ENCODE measurements at regions of chr10 and their contacts with region 1.

Region 1: GRCh38 chr10:24882047-24882698 is 70.2 kb downstream of the PRTFDC1 start:
- H3K4me3 Mint-ChIP-seq: no peak overlapping the region
- H3K27ac Mint-ChIP-seq: no peak overlapping the region
- H3K4me1 Mint-ChIP-seq: peaks cover 27% of the 10 kb centered on the region
- H3K27me3 Mint-ChIP-seq: peaks cover 3% of the 10 kb centered on the region

Region 2: GRCh38 chr10:24153031-24153430 is 729.1 kb before region 1 on chr10:
- intact Hi-C with region 1: no loop called
- H3K4me3 Mint-ChIP-seq: no peak overlapping the region
- H3K27ac Mint-ChIP-seq: no peak overlapping the region
- H3K4me1 Mint-ChIP-seq: no peaks in the 10 kb centered on the region
- H3K27me3 Mint-ChIP-seq: no peaks in the 10 kb centered on the region

Region 3: DNA sequence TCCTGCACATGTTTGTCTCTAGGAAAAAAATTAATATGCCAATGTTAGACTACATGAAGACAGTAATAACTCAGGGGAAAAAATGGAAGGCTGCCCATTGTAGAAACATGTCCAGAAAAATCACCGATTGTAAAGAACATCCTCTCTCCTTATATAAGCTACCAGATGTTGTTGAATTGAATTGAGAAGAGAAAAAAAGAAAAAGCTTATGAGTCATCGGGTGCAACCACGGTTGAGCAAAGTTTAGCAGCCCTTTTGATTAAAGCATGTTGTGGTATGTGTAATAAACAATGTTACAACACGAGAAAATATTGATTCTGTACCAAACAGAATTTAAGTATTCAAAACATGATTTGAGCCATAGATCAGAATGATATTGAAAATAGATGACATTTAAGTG is 56.2 kb before region 1 on chr10:
- intact Hi-C with region 1: no loop called
- H3K4me3 Mint-ChIP-seq: no peak overlapping the region
- H3K27ac Mint-ChIP-seq: no peak overlapping the region
- H3K4me1 Mint-ChIP-seq: no peaks in the 10 kb centered on the region
- H3K27me3 Mint-ChIP-seq: peaks cover 2% of the 10 kb centered on the region

Region 4: DNA sequence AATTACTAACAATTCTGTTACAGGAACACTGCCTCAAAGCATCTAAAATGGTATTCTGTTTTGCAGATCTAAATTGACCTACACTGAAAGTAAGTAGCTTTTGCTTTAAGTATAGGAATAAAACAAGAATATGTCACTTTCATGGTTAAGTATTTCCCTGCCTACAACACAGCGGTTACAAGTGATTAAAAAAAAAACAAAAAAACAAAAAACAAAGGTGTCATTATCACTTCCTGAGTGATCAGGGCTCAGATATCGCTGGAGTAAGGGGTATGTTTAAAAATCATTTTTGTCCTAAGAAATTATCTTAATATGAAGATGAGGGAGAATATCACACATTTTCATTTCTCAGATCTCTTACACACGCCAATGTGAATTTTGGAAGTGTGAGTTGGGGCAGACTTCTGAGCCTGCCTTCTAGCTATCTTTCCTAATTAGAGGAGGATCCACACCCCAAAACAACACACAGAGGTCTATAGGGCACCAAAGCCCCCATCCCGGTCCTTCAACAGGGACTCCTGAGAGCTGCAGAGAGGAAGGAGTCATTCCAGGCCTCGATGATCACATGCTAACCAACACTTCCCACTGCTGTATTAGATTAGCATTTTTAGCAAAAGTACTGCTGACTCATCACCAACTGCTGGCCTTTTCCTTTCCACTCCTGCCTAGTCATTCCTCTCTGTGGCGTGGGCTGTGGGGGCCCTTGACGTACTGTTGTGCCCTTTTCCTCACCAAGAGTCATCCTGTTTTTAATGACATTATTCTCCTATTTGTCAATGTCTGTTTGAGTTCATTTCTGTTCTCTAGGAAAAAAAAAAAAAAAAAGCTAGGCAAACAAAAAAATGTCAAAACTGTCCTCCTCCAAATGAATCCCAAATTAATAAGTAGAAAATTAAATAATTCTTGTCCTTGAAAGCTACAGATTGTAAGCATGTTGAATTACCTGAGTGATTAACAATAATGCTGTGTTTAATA is 39.0 kb after region 1 on chr10:
- intact Hi-C with region 1: loop called (anchors 5 kb)
- H3K4me3 Mint-ChIP-seq: peak overlapping the region; percentile 23
- H3K27ac Mint-ChIP-seq: peak overlapping the region; percentile 81
- H3K4me1 Mint-ChIP-seq: peaks cover 26% of the 10 kb centered on the region
- H3K27me3 Mint-ChIP-seq: no peaks in the 10 kb centered on the region

Measured in dendritic cell treated with granulocyte-macrophage colony-stimulating factor and Interleukin-4, amounts not matched to agents 40 ng/mL and 50 ng/mL, for 4 days (primary cell).